BJ (cell line): ENCODE measurements at regions of chr1 and their contacts with region 1.

Region 1: DNA sequence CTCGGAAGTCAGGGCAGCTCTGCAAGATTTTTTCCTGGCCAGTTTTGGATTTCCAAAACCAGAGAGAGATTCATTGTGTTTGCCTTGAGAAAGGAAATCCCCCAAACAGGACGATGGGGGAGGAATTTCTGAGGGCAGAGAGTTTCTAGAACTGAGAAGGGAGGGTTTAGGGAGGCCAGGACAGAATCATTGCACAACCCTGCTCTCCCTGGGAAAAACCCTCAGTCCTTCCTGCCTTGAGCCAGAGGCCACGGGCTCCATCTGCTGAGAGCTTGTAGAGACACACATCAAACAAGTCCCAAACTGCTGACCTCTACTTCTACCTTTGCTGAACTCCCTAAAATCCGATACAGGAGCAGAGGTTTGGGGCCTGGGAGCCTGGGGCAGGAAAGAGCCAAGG is 99.7 kb downstream of the NMNAT2 start:
- DNase-seq: peak; percentile 58
- H3K4me3 ChIP-seq: no peak overlapping the region
- H3K27me3 ChIP-seq: no peaks in the 10 kb centered on the region
- CTCF ChIP-seq: peak; percentile 87

Region 2: DNA sequence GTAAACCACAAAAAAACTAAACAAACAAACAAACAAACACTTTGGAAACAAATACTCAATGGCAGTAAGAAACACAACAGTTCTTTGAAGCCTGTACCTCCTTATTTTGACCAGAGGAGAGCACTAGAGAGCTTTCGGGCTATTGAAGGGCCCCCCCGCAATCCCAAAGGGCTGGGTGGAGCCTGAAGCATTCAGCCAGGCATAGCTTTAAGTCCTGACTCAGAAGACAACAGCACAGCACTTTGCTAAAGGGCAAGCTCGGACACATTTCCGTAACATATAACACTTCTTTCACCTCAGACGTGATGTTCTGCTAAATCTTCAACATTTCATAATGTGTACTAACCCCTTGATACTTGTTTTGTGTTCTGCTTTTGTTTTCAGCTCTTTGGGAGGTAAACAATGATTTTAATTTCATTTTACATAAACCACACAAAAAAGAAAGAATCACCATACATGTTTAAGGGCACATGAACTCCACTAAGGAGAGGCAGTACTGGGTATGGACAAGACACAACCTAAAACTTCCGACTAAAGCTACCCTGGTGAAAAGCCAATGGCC is 355.8 kb before region 1 on chr1:
- CTCF ChIA-PET with region 1: interaction called, 33 read pairs
- POLR2A ChIA-PET with region 1: no interaction called
- DNase-seq: peak; percentile 57
- H3K4me3 ChIP-seq: 0 out of 2 replicates have a peak overlapping the region, but pooled peaks have one; percentile 1
- H3K27me3 ChIP-seq: no peaks in the 10 kb centered on the region
- CTCF ChIP-seq: peak; percentile 91

Region 3: GRCh38 chr1:183306317-183307042 is 12.0 kb before region 1 on chr1:
- CTCF ChIA-PET with region 1: interaction called, 20 read pairs
- POLR2A ChIA-PET with region 1: no interaction called
- DNase-seq: no peak
- H3K4me3 ChIP-seq: no peak overlapping the region
- H3K27me3 ChIP-seq: no peaks in the 10 kb centered on the region
- CTCF ChIP-seq: no peak

Region 4: GRCh38 chr1:183339556-183340167 is 21.2 kb after region 1 on chr1:
- CTCF ChIA-PET with region 1: no interaction called
- POLR2A ChIA-PET with region 1: no interaction called
- DNase-seq: no peak
- H3K4me3 ChIP-seq: no peak overlapping the region
- H3K27me3 ChIP-seq: no peaks in the 10 kb centered on the region
- CTCF ChIP-seq: no peak